Activated T-helper 2 cell treated with anti-CD3 and anti-CD28 coated beads, Interferon-gamma antibody, Interleukin-2, Interleukin-4, amounts not matched to agents 10 μg/mL and 5 μg/mL and 100 μg/mL, durations not matched to agents 14 hours and 24 hours and 36 hours (primary cell): ENCODE measurements at regions of chr19 and their contacts with region 1.

Region 1: DNA sequence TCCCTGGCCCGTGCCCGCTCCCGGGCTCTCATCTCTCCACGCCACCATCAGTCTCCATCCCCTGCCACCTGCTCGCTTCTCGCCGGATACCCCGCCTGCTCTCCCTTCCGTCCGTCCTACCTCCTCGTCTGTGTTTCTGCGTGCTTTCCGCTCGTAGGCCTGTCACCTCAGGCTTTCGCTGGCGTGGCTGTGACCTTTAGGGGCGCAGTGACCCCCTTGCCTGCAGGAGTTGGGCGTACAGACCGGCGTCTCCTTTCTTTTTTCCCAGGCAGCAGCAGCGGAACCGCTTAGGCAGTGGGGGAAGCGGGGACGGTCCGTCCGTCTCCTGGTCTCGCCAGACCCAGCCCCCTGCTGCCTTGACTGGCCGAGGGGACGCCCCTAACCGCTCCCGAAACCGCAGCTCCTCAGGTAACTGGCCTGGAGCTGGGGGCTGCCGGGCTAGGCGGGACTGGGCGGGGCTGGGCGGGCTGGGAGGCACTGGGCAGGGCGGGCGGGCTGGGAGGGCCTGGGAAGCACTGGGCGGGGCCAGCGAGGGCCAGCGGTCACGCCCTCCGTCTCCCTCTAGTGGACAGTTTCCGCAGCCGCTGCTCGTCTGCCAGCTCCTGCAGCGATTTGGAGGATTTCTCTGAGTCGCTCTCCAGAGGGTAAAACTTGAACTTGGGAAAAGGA is 6.3 kb downstream of the PGLYRP1 start:
- DNase-seq: peak; percentile 72
- H3K4me3 Mint-ChIP-seq: peak overlapping the region; percentile 85
- H3K27ac Mint-ChIP-seq: peak overlapping the region; percentile 53
- H3K4me1 Mint-ChIP-seq: peaks cover 12% of the 10 kb centered on the region
- H3K27me3 Mint-ChIP-seq: peaks cover 18% of the 10 kb centered on the region

Region 2: GRCh38 chr19:45817010-45817724 is 199.4 kb before region 1 on chr19:
- intact Hi-C with region 1: loop called (anchors 5 kb)
- DNase-seq: peak; percentile 91
- H3K4me3 Mint-ChIP-seq: no peak overlapping the region
- H3K27ac Mint-ChIP-seq: no peak overlapping the region
- H3K4me1 Mint-ChIP-seq: peaks cover 3% of the 10 kb centered on the region
- H3K27me3 Mint-ChIP-seq: no peaks in the 10 kb centered on the region

Region 3: GRCh38 chr19:45906221-45906620 is 110.3 kb before region 1 on chr19:
- intact Hi-C with region 1: no loop called
- DNase-seq: no peak
- H3K4me3 Mint-ChIP-seq: no peak overlapping the region
- H3K27ac Mint-ChIP-seq: no peak overlapping the region
- H3K4me1 Mint-ChIP-seq: peaks cover 7% of the 10 kb centered on the region
- H3K27me3 Mint-ChIP-seq: peaks cover 6% of the 10 kb centered on the region